PC-3 (cell line): ENCODE measurements at regions of chr11 and their contacts with region 1.

Region 1: GRCh38 chr11:126403658-126404057 is 48.2 kb downstream of the ST3GAL4 start:
- DNase-seq: no peak
- ATAC-seq: peak; percentile 1; the same call in 1 of the 2 replicates
- H3K4me3 ChIP-seq: peak overlapping the region; percentile 29; the same call in 1 of the 2 replicates
- H3K27ac ChIP-seq: peak overlapping the region; percentile 99
- H3K4me1 ChIP-seq: peaks cover 48% of the 10 kb centered on the region
- H3K27me3 ChIP-seq: no peaks in the 10 kb centered on the region
- CTCF ChIP-seq: no peak

Region 2: GRCh38 chr11:126303623-126304456 is 99.8 kb before region 1 on chr11 and contains the start of gene DCPS:
- CTCF ChIA-PET with region 1: no interaction called
- POLR2A ChIA-PET with region 1: no interaction called
- intact Hi-C with region 1: loop called (anchors 5 kb)
- DNase-seq: peak; percentile 95
- ATAC-seq: peak; percentile 96
- H3K4me3 ChIP-seq: peak within 1 kb of the TSS; percentile 78
- H3K27ac ChIP-seq: peak within 1 kb of the TSS; percentile 75
- H3K4me1 ChIP-seq: peaks cover 25% of the 10 kb centered on the region
- H3K27me3 ChIP-seq: no peaks in the 10 kb centered on the region
- CTCF ChIP-seq: no peak
- total RNA-seq, gene DCPS: 52.6 and 55.1 TPM in 2 replicates

Region 3: DNA sequence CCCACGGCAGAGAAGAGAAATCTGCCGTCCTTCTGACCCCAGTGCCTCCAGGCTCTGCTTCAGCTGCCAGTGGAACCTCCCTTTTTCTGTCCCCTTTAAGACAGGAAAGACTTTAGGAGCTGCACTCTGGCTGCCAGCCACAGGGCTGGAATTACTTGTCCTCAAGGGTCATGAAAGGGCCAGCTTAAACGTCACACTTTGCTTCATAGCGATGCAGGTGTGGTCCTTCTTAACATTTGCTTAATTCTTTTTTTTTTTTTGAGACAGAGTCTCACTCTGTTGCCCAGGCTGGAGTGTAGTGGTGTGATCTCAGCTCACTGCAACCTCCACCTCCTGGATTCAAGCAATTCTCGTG is 63.6 kb before region 1 on chr11:
- CTCF ChIA-PET with region 1: no interaction called
- POLR2A ChIA-PET with region 1: interaction called, 10 read pairs
- intact Hi-C with region 1: no loop called
- DNase-seq: peak; percentile 89
- ATAC-seq: no peak
- H3K4me3 ChIP-seq: no peak overlapping the region
- H3K27ac ChIP-seq: peak overlapping the region; percentile 95
- H3K4me1 ChIP-seq: peaks cover 38% of the 10 kb centered on the region
- H3K27me3 ChIP-seq: no peaks in the 10 kb centered on the region
- CTCF ChIP-seq: no peak

Region 4: DNA sequence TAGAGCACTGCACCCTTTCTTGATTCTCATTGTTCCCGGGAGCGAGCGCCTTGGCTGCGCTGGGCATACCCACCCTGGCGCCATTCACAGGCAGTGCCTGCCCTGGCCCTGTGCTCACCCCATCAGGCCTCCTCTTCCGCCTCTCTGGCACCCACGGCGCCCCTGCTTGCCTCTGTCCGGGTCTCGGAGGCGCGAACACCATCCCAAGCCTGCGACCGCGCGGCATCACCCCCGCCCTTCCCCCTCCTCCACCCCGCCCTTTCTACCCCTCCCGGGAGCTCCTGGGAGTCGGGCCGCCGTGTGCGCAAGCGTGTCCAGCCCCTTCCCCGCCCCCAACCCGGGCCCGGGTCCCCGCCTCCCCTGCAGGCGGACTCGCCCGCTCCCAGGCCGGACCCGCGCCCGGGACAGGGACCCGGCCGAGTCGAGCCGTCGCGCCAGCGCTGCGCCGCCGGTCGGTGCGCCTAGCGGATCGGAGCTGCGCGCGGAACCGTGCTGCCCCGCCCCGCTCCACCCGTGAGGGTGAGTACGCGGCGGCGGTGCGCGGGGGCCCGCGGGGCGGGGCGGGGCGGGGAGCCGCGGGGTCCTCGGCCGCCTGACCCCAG is 48.2 kb before region 1 on chr11 and contains the start of gene ST3GAL4:
- CTCF ChIA-PET with region 1: no interaction called
- POLR2A ChIA-PET with region 1: interaction called, 3 read pairs
- intact Hi-C with region 1: loop called (anchors 1 kb)
- DNase-seq: peak; percentile 83
- ATAC-seq: peak; percentile 64
- H3K4me3 ChIP-seq: peak within 1 kb of the TSS; percentile 83
- H3K27ac ChIP-seq: peak within 1 kb of the TSS; percentile 78
- H3K4me1 ChIP-seq: peaks cover 62% of the 10 kb centered on the region
- H3K27me3 ChIP-seq: no peaks in the 10 kb centered on the region
- CTCF ChIP-seq: no peak
- total RNA-seq, gene ST3GAL4: 126 and 148 TPM in 2 replicates

Region 5: GRCh38 chr11:126386031-126386728 is 17.5 kb before region 1 on chr11:
- CTCF ChIA-PET with region 1: interaction called, 3 read pairs
- POLR2A ChIA-PET with region 1: no interaction called
- intact Hi-C with region 1: loop called (anchors 1 kb)
- DNase-seq: no peak
- ATAC-seq: peak; percentile 78; the same call in 1 of the 2 replicates
- H3K4me3 ChIP-seq: no peak overlapping the region
- H3K27ac ChIP-seq: peak overlapping the region; percentile 87
- H3K4me1 ChIP-seq: peaks cover 56% of the 10 kb centered on the region
- H3K27me3 ChIP-seq: no peaks in the 10 kb centered on the region
- CTCF ChIP-seq: no peak

Region 6: GRCh38 chr11:126431401-126432064 is 27.9 kb after region 1 on chr11:
- CTCF ChIA-PET with region 1: interaction called, 3 read pairs
- POLR2A ChIA-PET with region 1: no interaction called
- intact Hi-C with region 1: loop called (anchors 1 kb)
- DNase-seq: peak; percentile 98
- ATAC-seq: peak; percentile 86
- H3K4me3 ChIP-seq: no peak overlapping the region
- H3K27ac ChIP-seq: peak overlapping the region; percentile 93
- H3K4me1 ChIP-seq: peaks cover 25% of the 10 kb centered on the region
- H3K27me3 ChIP-seq: no peaks in the 10 kb centered on the region
- CTCF ChIP-seq: no peak

Region 7: GRCh38 chr11:126800009-126800408 is 396.4 kb after region 1 on chr11:
- CTCF ChIA-PET with region 1: no interaction called
- POLR2A ChIA-PET with region 1: no interaction called
- intact Hi-C with region 1: no loop called
- DNase-seq: no peak
- ATAC-seq: no peak
- H3K4me3 ChIP-seq: no peak overlapping the region
- H3K27ac ChIP-seq: no peak overlapping the region
- H3K4me1 ChIP-seq: no peaks in the 10 kb centered on the region
- H3K27me3 ChIP-seq: peaks cover 44% of the 10 kb centered on the region
- CTCF ChIP-seq: no peak